ENCODE measurements at regions of chr16 and their contacts with region 1.

Region 1: GRCh38 chr16:3880623-3881498 is at the start of gene CREBBP:
- DNase-seq: peak; percentile 84
- H3K4me3 Mint-ChIP-seq: peak within 1 kb of the TSS; percentile 91
- H3K27ac Mint-ChIP-seq: peak within 1 kb of the TSS; percentile 35
- H3K4me1 Mint-ChIP-seq: peaks cover 18% of the 10 kb centered on the region
- H3K27me3 Mint-ChIP-seq: no peaks in the 10 kb centered on the region
- CTCF ChIP-seq: no peak
- total RNA-seq, gene CREBBP: 73.7 and 74.0 TPM in 2 replicates

Region 2: DNA sequence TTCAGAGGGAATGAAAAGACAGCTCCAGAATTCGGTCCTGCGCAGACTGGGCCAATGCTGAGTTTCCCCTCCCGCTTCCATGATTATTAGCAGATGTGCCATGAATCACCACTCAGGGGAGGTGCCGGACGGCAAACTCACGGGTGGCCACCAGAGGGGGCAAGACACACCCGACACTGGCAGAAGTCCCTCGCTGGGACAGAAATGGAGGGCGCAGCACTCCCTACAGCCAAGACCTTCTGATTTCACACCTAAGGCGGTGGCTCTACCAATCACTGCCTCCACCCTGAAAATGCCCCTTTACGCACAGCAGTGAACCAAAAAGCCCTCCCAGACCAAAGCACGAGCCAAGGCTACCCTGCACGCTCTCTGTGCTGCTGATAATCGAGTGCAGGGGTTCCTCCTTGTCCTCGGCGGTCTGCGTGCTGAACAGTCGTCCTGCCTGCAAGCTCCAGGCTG is 190.4 kb before region 1 on chr16:
- CTCF ChIA-PET with region 1: interaction called, 5 read pairs
- POLR2A ChIA-PET with region 1: interaction called, 9 read pairs
- intact Hi-C with region 1: loop called (anchors 1 kb)
- DNase-seq: peak; percentile 83
- H3K4me3 Mint-ChIP-seq: peak overlapping the region; percentile 43
- H3K27ac Mint-ChIP-seq: peak overlapping the region; percentile 66
- H3K4me1 Mint-ChIP-seq: peaks cover 8% of the 10 kb centered on the region
- H3K27me3 Mint-ChIP-seq: no peaks in the 10 kb centered on the region
- CTCF ChIP-seq: peak; percentile 87

Region 3: DNA sequence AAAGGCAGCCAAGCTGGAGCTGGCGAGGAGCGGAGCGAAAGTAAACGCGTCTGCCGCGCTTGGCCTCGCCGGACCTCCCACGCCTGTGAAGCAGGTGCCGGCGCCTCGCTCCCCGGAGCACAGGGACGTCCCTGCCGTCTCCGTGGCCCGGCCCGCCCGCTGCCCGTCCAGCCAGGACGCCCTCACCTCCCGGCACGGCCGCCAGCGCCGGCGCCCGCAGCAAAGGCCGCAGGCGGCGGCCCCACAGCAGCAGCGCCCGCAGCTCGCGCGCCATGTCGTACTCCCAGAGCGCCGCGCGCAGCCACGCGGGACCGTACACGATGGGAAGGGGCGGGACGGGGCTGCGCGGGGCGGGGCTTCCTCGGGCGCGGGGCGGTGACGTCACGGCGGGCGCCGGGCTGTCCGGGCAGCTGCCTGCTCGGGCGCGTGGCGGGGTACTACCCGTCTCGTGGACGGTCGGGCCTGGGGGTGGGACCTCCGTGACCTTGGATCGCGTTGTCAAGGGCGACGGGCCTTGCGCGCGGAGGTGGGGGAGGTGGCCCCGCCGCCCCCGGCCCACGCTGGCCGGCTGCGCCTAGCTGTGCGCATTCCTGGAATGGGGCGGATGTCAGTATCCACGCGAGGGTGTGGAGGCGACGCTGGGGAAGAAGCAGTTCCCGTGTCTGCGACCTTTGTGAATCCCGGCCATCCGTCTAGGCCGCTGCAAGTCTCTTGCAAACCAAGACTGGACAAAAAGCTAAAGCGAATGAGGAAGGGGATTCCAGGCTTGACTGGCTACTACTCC is 163.4 kb before region 1 on chr16 and contains the start of gene TRAP1:
- CTCF ChIA-PET with region 1: no interaction called
- POLR2A ChIA-PET with region 1: interaction called, 15 read pairs
- intact Hi-C with region 1: no loop called
- DNase-seq: peak; percentile 71
- H3K4me3 Mint-ChIP-seq: peak within 1 kb of the TSS; percentile 84
- H3K27ac Mint-ChIP-seq: peak within 1 kb of the TSS; percentile 61
- H3K4me1 Mint-ChIP-seq: peaks cover 29% of the 10 kb centered on the region
- H3K27me3 Mint-ChIP-seq: no peaks in the 10 kb centered on the region
- CTCF ChIP-seq: no peak
- total RNA-seq, gene TRAP1: 145 and 274 TPM in 2 replicates

Region 4: DNA sequence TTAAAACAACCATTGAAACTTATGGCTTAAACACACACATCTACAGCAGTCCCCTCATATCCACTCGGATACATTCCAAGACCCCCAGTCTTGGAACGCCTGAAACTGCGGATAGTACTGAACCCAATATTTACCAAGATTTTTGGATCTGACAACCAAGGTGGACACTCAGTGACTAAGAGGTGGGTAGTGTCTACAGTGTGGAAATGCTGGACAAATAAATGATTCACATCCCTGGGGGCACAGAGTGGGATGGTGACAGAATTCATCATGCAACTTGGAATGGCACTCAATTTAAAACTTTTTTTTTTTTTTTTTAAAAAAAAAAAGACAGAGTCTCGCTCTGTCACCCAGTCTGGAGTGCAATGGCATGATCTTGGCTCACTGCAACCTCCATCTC is 109.4 kb before region 1 on chr16:
- CTCF ChIA-PET with region 1: no interaction called
- POLR2A ChIA-PET with region 1: interaction called, 13 read pairs
- intact Hi-C with region 1: loop called (anchors 2 kb)
- DNase-seq: peak; percentile 93
- H3K4me3 Mint-ChIP-seq: no peak overlapping the region
- H3K27ac Mint-ChIP-seq: no peak overlapping the region
- H3K4me1 Mint-ChIP-seq: peaks cover 11% of the 10 kb centered on the region
- H3K27me3 Mint-ChIP-seq: no peaks in the 10 kb centered on the region
- CTCF ChIP-seq: no peak

Region 5: DNA sequence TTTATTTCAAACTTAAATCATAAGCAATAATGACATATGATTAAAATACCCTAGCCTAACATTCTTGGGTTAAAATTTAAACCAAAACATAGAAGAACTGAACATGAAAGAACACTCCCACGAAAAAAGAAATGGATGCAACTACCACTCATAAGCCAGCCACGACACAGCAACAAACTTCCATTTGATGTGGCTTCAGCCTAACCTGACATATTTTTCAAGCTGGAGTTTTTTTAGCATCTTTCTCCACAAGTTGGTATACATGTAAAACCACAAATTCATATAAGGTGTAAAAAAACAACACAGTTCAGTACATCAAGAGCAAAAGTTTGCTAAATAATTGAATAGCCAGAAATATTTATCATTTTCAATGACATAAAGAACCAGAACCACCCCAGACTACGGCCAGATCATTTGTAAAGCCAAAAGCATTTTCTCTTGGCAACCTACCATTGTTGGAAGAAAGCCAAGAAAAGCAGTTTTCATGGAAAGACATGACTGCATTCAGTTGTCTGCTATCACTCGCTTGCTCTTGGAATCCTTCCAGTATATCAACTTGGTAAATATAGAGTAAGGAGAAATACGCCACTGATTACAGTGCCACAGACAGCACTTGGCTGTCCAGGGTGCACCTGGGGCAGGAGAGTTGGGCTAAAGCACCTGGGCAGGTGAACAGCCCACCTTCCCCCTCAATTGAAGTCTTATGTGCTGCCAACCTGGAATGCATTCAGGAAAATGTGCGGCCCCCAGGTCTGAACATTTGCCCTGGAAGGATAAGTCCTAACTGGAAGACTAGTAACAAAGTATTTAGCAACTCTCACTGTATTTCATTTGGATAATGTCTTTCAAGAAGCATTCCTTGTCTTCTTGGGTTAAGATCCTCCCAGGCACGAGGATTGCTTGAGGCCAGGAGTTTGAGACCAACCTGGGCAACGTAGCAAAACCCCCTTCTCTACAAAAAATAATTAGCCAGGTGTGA is 60.8 kb before region 1 on chr16:
- CTCF ChIA-PET with region 1: no interaction called
- POLR2A ChIA-PET with region 1: no interaction called
- intact Hi-C with region 1: no loop called
- DNase-seq: peak; percentile 96
- H3K4me3 Mint-ChIP-seq: no peak overlapping the region
- H3K27ac Mint-ChIP-seq: no peak overlapping the region
- H3K4me1 Mint-ChIP-seq: peaks cover 57% of the 10 kb centered on the region
- H3K27me3 Mint-ChIP-seq: no peaks in the 10 kb centered on the region
- CTCF ChIP-seq: no peak

Region 6: GRCh38 chr16:3857189-3858043 is 23.4 kb before region 1 on chr16:
- CTCF ChIA-PET with region 1: no interaction called
- POLR2A ChIA-PET with region 1: interaction called, 10 read pairs
- intact Hi-C with region 1: no loop called
- DNase-seq: peak; percentile 93
- H3K4me3 Mint-ChIP-seq: peak overlapping the region; percentile 63
- H3K27ac Mint-ChIP-seq: peak overlapping the region; percentile 28
- H3K4me1 Mint-ChIP-seq: peaks cover 48% of the 10 kb centered on the region
- H3K27me3 Mint-ChIP-seq: no peaks in the 10 kb centered on the region
- CTCF ChIP-seq: no peak

Measured in MCF 10A (cell line).